B cell (primary cell): ENCODE measurements at regions of chr9 and their contacts with region 1.

Region 1: DNA sequence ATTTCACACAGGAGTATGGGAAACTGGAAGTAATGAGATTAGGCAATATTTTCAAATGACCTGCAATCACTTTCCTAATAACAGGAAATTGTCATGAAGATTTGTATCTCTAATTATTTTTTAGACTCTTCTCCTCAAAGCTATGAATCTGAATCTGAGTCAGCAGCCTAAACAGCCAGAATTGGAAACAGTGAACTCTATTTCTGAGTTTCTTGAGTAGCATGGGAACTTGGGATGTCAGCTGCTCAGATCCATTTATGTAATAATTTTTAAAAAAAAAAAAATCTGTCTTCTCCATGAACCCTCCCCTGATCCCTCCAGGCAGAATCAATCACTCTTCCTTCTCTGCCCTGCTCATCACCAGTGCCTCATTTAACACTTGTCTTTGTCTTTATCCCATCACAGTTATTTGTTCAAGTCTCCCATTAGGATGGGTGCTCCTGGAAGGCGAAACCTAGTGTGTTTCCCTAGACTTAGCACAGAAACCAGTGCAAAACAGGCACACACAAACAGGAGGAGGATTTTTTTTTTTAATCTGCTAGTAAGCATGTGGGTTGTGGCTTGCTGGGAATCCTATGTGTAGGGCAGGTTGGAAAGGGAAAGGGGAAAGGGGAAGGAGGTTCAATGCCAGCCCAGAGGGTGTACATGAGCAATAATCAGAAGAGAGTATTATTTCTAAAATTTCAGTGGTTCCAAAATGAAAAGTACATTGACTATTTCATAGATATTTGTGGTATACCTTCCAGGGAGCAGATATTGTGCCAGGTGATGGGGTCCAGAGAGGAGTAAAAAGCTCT is 186.8 kb downstream of the TTLL11 start:
- DNase-seq: no peak
- ATAC-seq: no peak
- H3K4me3 ChIP-seq: no peak overlapping the region
- H3K4me3 Mint-ChIP-seq: no peak overlapping the region
- H3K27ac ChIP-seq: no peak overlapping the region
- H3K27ac Mint-ChIP-seq: no peak overlapping the region
- H3K4me1 ChIP-seq: no peaks in the 10 kb centered on the region
- H3K4me1 Mint-ChIP-seq: no peaks in the 10 kb centered on the region
- H3K27me3 ChIP-seq: no peaks in the 10 kb centered on the region
- H3K27me3 Mint-ChIP-seq: no peaks in the 10 kb centered on the region
- CTCF ChIP-seq: no peak

Region 2: DNA sequence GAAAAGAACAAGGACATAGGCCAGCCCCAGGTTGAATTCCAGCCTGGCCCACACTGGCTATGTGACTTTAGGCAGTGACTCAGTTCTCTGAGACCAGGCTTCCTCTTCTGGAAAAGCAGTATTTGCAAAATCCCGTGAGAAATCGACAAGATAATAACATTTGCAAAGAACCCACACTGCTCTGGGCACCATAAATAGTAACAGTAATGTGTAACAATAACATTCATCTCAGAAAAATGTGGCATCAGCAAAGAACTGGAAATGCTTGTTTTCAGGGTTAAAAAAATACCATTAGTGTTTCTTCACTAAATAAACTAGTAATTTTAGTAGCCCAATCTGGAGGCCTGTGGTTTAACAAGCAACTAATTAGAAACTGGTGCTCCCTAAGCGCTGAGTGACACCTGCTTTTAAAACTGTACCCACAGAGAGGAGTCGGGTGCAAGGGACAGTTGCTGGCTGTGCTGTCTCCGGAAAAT is 38.5 kb after region 1 on chr9:
- CTCF ChIA-PET with region 1: no interaction called
- POLR2A ChIA-PET with region 1: no interaction called
- intact Hi-C with region 1: loop called (anchors 5 kb)
- DNase-seq: no peak
- ATAC-seq: no peak
- H3K4me3 ChIP-seq: no peak overlapping the region
- H3K4me3 Mint-ChIP-seq: peak overlapping the region; percentile 81
- H3K27ac ChIP-seq: no peak overlapping the region
- H3K27ac Mint-ChIP-seq: peak overlapping the region; percentile 93
- H3K4me1 ChIP-seq: peaks cover 35 to 68% of the 10 kb centered on the region in 2 donors
- H3K4me1 Mint-ChIP-seq: peaks cover 40% of the 10 kb centered on the region
- H3K27me3 ChIP-seq: no peaks in the 10 kb centered on the region
- H3K27me3 Mint-ChIP-seq: no peaks in the 10 kb centered on the region
- CTCF ChIP-seq: no peak